H1 (cell line): ENCODE measurements at regions of chr16 and their contacts with region 1.

Region 1: GRCh38 chr16:56356276-56357240 is 68.8 kb downstream of the AMFR start:
- DNase-seq: peak; percentile 75 to 82
- H3K4me3 ChIP-seq: peak overlapping the region in 2 of 4 experiments; percentile 19 to 53; a peak in 3 of 8 replicates
- H3K27ac ChIP-seq: no peak overlapping the region; the same call in 1 of the 2 replicates
- H3K4me1 ChIP-seq: peaks cover 0 to 15% (median 9%) of the 10 kb centered on the region in 4 experiments; a peak in 6 of 7 replicates
- H3K27me3 ChIP-seq: no peaks in the 10 kb centered on the region; a peak in 1 of 7 replicates
- CTCF ChIP-seq: peak; percentile 88
- EP300 ChIP-seq: no peak
- POLR2A ChIP-seq: no peak
- RAD21 ChIP-seq: peak; percentile 77 to 79

Region 2: GRCh38 chr16:56281256-56281805 is 75.2 kb before region 1 on chr16:
- CTCF ChIA-PET with region 1: no interaction called
- POLR2A ChIA-PET with region 1: no interaction called
- DNase-seq: peak; percentile 68 to 91
- H3K4me3 ChIP-seq: peak overlapping the region in 1 of 4 experiments; percentile 44; a peak in 3 of 8 replicates
- H3K27ac ChIP-seq: no peak overlapping the region
- H3K4me1 ChIP-seq: peaks cover 0 to 41% (median 32%) of the 10 kb centered on the region in 4 experiments; a peak in 6 of 7 replicates
- H3K27me3 ChIP-seq: no peaks in the 10 kb centered on the region
- CTCF ChIP-seq: peak in 2 of 3 experiments; percentile 34 to 64; a peak in 3 of 4 replicates
- EP300 ChIP-seq: peak in 1 of 2 experiments; percentile 83; a peak in 1 of 3 replicates
- POLR2A ChIP-seq: no peak
- RAD21 ChIP-seq: peak in 1 of 2 experiments; percentile 10; a peak in 2 of 4 replicates

Region 3: DNA sequence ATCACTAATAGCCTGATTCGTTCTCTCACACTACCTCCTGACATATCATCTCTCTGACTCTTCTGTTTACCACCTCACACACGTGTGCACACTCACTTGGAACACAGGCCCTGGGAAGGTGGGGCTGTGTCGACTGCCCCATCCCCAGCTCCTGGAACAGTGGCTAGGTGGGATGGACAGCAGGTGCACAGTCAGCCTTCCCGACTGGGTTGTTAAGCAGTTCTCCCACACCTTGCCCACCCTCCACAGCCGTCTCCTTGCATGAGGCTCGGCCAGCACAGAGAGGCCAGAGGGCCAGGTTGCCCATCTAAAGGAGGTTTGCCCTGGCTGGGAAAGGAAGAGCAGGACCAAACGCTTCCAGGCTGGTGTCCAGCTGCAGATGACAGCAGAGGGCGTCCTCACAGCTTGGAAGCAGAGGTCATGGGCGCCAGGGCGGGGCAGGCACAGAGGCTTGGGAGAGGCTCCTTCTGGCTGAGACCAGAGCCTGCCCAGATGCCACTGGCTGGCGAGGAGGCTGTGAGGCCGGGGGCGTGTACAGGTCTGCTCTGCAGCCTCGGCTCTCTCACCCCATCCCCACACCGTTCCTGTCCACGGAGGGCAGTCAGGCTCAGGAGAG is 24.0 kb before region 1 on chr16:
- CTCF ChIA-PET with region 1: interaction called, 16 read pairs
- POLR2A ChIA-PET with region 1: no interaction called
- DNase-seq: peak in 1 of 2 experiments; percentile 66
- H3K4me3 ChIP-seq: no peak overlapping the region
- H3K27ac ChIP-seq: no peak overlapping the region
- H3K4me1 ChIP-seq: no peaks in the 10 kb centered on the region
- H3K27me3 ChIP-seq: no peaks in the 10 kb centered on the region
- CTCF ChIP-seq: peak; percentile 56 to 64 (median 59)
- EP300 ChIP-seq: no peak
- POLR2A ChIP-seq: no peak
- RAD21 ChIP-seq: peak; percentile 45 to 59

Region 4: DNA sequence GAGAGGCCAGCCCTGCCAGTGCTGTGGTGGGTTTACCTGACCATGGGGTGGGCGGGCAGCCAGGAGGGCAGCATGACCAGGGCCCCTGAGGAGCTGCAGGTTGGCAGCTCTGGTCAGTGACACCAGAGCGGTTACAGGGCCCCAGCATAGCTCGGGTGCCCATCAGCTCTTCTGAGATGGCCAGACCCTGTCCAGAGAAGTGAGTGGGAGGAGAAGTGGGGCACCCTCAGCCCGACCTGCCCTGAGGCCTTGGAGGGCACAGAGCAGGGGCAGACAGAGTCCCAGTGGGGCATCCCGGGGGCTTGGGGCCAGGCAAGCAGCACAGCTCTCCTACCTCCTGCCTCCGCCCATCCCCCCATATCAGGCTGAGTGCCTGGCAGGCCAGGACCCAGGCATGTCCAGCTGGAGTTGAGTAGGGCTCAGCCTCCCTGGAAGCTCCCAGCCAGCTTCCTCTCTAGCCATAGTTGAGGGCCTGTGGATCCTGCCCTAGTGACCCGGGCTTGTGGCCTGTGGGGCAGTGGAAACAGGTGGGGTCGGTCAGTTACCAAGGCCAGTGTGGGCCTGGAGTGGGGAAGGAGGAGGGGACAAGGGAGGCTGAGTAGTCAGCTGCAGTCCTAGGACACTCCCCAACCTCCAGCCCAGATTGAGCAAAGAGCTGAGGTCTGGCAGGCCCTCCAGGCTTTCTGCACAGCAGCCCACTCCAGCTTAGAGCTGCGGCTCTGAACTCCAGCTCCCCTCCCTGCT is 14.7 kb before region 1 on chr16:
- CTCF ChIA-PET with region 1: interaction called, 14 read pairs
- POLR2A ChIA-PET with region 1: interaction called, 4 read pairs
- DNase-seq: no peak
- H3K4me3 ChIP-seq: no peak overlapping the region
- H3K27ac ChIP-seq: no peak overlapping the region
- H3K4me1 ChIP-seq: no peaks in the 10 kb centered on the region
- H3K27me3 ChIP-seq: no peaks in the 10 kb centered on the region
- CTCF ChIP-seq: no peak
- EP300 ChIP-seq: no peak
- POLR2A ChIP-seq: no peak
- RAD21 ChIP-seq: no peak

Region 5: DNA sequence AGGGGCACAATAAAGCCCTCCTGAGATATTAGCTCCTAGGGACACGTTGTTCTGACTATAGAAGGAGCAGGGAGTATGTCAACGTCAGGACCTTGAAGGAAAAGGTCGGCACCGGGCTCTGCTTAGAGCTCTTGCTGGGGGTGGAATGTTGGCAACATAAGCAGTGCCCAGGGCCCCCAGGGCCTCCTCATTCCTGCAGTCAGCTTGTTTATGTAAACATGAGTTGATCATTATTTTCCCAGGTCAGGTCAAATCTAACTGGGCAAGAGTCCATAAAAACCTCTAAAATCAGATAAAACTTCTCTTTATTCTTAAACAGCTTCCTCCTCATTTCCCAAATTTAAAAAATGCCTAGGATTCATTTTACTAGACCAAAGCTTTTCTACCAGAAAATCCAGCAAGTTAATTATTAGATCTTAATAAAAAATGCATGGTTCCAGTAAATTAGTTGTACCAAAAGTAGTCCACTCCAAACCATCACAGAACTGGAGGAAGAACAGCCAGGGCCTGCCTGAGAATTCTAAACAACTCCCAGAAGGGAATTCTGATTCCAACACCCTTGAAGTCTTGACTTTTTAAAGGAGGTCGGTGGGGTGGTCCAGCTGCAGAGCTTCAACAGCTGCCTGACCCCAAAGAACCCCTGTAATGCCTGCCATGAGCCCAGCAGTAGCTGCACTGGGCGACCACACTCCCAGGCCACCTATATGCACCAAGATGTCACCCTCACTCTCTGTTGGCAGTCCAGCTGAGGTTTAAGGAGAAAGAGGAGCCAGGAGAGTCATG is 14.5 kb after region 1 on chr16:
- CTCF ChIA-PET with region 1: interaction called, 16 read pairs
- POLR2A ChIA-PET with region 1: interaction called, 4 read pairs
- DNase-seq: no peak
- H3K4me3 ChIP-seq: no peak overlapping the region
- H3K27ac ChIP-seq: no peak overlapping the region
- H3K4me1 ChIP-seq: no peaks in the 10 kb centered on the region
- H3K27me3 ChIP-seq: no peaks in the 10 kb centered on the region
- CTCF ChIP-seq: no peak
- EP300 ChIP-seq: no peak
- POLR2A ChIP-seq: no peak
- RAD21 ChIP-seq: no peak